AG04449 (cell line): ENCODE measurements at regions of chr1 and their contacts with region 1.

Region 1: DNA sequence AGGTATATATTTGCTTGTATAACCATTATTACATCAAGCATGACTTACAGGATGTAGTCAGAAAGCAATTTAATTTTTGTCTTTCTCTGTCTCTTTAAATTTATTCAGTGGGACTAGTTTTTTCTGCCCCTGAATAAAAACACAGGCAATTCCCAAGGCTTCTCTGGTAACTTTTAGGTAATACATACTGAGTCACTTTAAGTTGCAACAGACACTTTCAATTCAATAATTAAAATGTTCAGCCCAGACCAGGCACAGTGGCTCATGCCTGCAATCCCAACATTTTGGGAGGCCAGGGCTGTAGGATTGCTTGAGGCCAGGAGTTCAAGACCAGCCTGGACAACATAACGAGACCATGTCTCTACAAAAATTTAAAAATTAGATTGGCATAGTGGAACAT is 12.3 kb downstream of the SLC44A3 start:
- DNase-seq: no peak
- H3K4me3 ChIP-seq: no peak overlapping the region
- CTCF ChIP-seq: no peak

Region 2: DNA sequence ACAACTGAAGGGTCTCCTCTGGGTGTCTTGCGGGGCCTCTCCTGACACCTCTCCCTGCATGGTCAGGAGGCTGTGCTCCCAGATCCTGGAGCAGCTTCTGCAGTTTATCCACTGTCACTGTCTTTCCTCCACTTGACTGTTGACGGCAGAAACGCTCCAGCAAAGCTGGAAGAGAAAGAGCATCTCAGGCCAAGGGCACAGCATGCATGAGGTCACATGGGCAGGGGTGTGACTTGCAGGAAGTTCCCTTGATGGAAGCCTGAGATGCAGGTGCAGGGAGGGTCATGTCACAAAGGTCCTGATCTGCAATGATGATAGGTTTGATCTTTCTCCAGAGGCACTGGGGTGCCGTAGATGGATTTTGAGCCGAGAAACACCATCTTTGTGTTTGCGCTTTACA is 11.0 kb after region 1 on chr1:
- CTCF ChIA-PET with region 1: interaction called, 12 read pairs
- POLR2A ChIA-PET with region 1: no interaction called
- DNase-seq: no peak
- H3K4me3 ChIP-seq: no peak overlapping the region
- CTCF ChIP-seq: no peak